Activated B cell treated with CpG ODN at 0.5 μM for 24 hours (primary cell): ENCODE measurements at regions of chr6 and their contacts with region 1.

Region 1: DNA sequence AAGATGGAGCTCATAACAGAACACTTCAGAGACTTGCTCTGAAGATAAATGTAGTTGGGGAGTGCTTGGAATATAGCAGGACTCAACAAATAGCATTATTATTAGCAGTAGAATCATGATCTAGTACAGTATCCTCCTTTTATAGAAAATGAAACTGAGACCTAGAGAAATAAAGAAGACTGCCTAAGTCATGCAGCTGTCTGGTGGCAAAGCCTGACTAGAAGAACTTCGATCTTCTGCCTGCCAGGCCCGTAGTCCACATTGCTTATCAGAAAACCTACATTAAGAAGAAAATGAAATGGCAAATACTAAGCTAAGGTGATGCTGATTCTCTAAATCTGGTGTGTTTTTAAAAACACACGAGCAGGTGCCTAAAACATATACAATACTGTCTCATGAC is 46.4 kb upstream of the DST start:
- DNase-seq: no peak
- ATAC-seq: no peak
- H3K4me3 Mint-ChIP-seq: no peak overlapping the region
- H3K27ac Mint-ChIP-seq: no peak overlapping the region
- H3K4me1 Mint-ChIP-seq: no peaks in the 10 kb centered on the region
- H3K27me3 Mint-ChIP-seq: no peaks in the 10 kb centered on the region
- CTCF ChIP-seq: no peak

Region 2: GRCh38 chr6:56699066-56699654 is 10.0 kb after region 1 on chr6:
- CTCF ChIA-PET with region 1: interaction called, 10 read pairs
- POLR2A ChIA-PET with region 1: no interaction called
- intact Hi-C with region 1: no loop called
- DNase-seq: no peak
- ATAC-seq: no peak
- H3K4me3 Mint-ChIP-seq: no peak overlapping the region
- H3K27ac Mint-ChIP-seq: no peak overlapping the region
- H3K4me1 Mint-ChIP-seq: no peaks in the 10 kb centered on the region
- H3K27me3 Mint-ChIP-seq: no peaks in the 10 kb centered on the region
- CTCF ChIP-seq: no peak

Region 3: DNA sequence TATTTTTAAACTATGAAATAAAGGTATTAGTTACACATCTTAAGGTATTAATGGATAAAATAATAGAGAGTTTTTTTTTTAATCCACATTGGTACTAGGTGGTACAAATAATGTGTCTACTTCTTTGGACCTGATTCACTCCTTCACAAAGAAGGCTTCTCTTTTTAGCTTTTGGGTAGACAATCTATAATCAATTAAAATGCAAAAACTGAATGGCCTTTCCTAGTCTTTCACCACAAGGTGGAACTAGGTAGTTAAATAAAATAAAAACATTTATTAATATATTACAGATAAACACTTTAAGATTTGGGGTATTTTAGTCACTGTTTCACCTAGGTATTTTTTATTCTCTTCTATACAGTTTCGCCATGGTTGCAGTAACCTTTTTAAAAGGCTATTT is 21.8 kb after region 1 on chr6:
- CTCF ChIA-PET with region 1: no interaction called
- POLR2A ChIA-PET with region 1: no interaction called
- intact Hi-C with region 1: no loop called
- DNase-seq: no peak
- ATAC-seq: no peak
- H3K4me3 Mint-ChIP-seq: no peak overlapping the region
- H3K27ac Mint-ChIP-seq: no peak overlapping the region
- H3K4me1 Mint-ChIP-seq: no peaks in the 10 kb centered on the region
- H3K27me3 Mint-ChIP-seq: no peaks in the 10 kb centered on the region
- CTCF ChIP-seq: no peak

Region 4: DNA sequence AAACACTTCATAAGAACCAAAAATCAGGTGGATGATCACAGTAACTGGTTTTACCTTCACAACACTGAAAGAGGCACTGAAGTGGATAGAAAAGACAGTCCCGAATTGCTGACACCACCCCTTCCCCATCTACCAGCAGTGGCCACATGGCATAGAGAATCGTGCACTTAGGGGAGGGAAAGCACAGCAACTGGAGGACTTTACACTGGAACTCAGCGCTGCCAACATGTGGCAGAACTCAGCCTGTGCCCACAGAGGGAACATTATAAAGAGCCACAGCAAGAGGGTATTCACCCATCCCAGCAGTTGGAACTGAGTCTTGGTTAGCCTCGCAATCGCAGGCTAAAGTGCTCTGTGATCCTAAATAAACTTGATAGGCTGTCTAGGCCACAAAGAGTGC is 350.9 kb after region 1 on chr6:
- CTCF ChIA-PET with region 1: no interaction called
- POLR2A ChIA-PET with region 1: no interaction called
- intact Hi-C with region 1: no loop called
- DNase-seq: no peak
- ATAC-seq: no peak
- H3K4me3 Mint-ChIP-seq: no peak overlapping the region
- H3K27ac Mint-ChIP-seq: no peak overlapping the region
- H3K4me1 Mint-ChIP-seq: no peaks in the 10 kb centered on the region
- H3K27me3 Mint-ChIP-seq: peaks cover 30% of the 10 kb centered on the region
- CTCF ChIP-seq: no peak